ENCODE measurements at regions of chr22 and their contacts with region 1.

Region 1: DNA sequence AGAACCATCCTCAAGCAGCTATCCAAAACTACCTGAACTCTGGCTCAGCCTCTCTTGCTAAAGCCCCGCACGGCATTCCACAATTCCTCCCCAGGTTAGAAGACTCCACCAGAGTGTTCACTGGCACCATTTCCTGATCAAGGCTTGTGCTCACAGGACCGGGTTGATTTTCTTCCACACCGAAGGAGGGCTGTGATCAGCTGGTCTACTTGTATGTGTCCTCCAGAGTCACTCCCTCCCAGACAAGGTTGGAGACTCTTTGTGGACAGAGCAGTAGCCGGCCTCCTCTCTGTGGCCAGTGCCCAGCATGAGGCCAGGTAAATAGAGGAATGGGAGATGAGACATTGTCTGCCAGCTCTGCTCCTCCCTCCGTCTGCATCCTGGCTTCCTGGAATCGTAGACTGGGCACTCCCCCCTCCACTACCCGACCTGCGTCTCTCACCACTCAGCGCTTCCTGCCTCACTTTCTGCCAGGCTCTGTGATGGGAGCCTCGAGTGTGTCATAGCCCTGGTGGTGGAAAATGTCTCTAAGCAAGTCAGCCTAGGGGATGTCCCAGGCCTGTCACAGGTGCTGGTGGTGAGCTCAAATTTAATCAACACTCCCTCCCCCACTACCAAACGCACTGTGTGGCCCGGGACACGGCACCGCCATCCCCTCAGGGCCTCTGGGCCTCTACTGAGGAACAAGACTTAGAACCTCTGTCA is 12.5 kb upstream of the TMPRSS6 start:
- DNase-seq: peak; percentile 96
- H3K4me3 Mint-ChIP-seq: peak overlapping the region; percentile 74
- H3K27ac Mint-ChIP-seq: peak overlapping the region; percentile 99
- H3K4me1 Mint-ChIP-seq: peaks cover 88% of the 10 kb centered on the region
- H3K27me3 Mint-ChIP-seq: no peaks in the 10 kb centered on the region

Region 2: DNA sequence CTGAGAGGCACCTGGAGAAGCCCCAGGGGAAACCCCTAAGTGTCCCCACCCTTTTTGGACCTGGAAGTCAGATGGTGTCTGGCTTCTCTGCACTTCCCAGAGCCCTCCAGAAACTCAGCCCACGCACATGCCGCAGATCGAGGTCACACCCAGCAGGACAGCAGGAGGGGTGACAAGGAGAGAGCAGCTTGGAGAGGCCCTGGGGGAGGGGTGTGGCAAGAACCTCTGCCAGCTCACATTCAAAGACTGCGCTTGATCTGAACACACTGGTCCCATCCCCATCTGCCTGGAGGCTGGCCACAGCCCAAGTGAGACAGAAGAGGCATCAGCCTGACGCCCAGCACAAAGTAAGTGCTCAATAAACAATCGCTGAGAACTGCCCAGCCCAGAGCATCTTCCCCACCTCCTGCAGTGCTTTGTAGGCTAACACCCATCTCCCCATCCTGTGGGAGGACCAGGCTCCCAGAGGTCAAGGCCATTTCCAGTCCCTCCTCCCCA is 33.9 kb before region 1 on chr22:
- CTCF ChIA-PET with region 1: interaction called, 4 read pairs
- POLR2A ChIA-PET with region 1: interaction called, 194 read pairs
- DNase-seq: peak; percentile 38
- H3K4me3 Mint-ChIP-seq: peak overlapping the region; percentile 54
- H3K27ac Mint-ChIP-seq: peak overlapping the region; percentile 40
- H3K4me1 Mint-ChIP-seq: peaks cover 50% of the 10 kb centered on the region
- H3K27me3 Mint-ChIP-seq: no peaks in the 10 kb centered on the region

Region 3: DNA sequence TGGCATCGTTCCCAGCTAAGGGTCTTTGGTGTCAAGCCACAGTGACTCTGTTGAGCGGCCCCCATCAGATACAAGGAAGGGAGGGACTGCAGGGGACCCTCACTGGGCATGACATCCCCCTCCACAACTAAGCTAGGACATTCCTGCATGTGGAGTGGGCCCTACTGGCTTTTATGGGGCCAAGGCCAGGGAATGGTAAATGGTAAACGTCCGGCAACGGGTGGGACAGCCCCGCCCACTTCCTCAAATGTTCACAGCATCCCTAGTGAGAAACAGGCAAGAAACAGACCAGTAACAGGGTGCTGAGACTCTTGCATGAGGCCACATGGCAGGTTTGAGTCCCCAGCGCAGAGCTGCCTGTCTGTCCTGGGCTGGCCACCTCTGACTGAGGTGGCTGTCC is 16.9 kb before region 1 on chr22:
- CTCF ChIA-PET with region 1: interaction called, 5 read pairs
- POLR2A ChIA-PET with region 1: interaction called, 20 read pairs
- DNase-seq: no peak
- H3K4me3 Mint-ChIP-seq: no peak overlapping the region
- H3K27ac Mint-ChIP-seq: no peak overlapping the region
- H3K4me1 Mint-ChIP-seq: peaks cover 22% of the 10 kb centered on the region
- H3K27me3 Mint-ChIP-seq: no peaks in the 10 kb centered on the region

Region 4: DNA sequence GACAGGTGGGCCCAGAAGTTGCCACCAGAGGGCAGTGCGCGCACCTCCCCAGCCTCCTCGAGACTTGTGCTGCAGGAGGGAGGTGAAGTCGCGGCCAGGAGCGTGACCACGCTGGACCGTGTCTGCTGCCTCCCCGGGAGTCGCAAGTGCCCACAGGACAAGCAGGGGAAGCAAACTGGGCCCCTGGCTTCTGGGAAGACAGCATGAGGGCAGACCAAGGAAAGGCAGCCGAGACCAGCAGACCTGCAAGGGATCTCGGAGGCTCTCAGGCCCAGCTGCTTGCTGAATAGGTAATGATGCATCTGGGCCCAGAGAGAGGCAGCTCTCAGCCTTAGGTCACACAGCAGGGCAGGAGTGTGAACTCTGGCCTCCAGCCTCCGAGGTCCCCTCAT is 44.6 kb after region 1 on chr22:
- CTCF ChIA-PET with region 1: interaction called, 13 read pairs
- POLR2A ChIA-PET with region 1: interaction called, 116 read pairs
- DNase-seq: peak; percentile 87
- H3K4me3 Mint-ChIP-seq: peak overlapping the region; percentile 71
- H3K27ac Mint-ChIP-seq: peak overlapping the region; percentile 94
- H3K4me1 Mint-ChIP-seq: peaks cover 85% of the 10 kb centered on the region
- H3K27me3 Mint-ChIP-seq: no peaks in the 10 kb centered on the region